Activated B cell treated with CpG ODN at 0.5 μM for 24 hours (primary cell): ENCODE measurements at regions of chr9 and their contacts with region 1.

Region 1: GRCh38 chr9:34178520-34179212 is at the start of gene UBAP1:
- DNase-seq: peak; percentile 88
- ATAC-seq: peak; percentile 97
- H3K4me3 Mint-ChIP-seq: peak within 1 kb of the TSS; percentile 99
- H3K27ac Mint-ChIP-seq: peak within 1 kb of the TSS; percentile 96
- H3K4me1 Mint-ChIP-seq: peaks cover 20% of the 10 kb centered on the region
- H3K27me3 Mint-ChIP-seq: no peaks in the 10 kb centered on the region
- CTCF ChIP-seq: no peak
- total RNA-seq, gene UBAP1: 28.3 and 30.6 TPM in 2 replicates

Region 2: DNA sequence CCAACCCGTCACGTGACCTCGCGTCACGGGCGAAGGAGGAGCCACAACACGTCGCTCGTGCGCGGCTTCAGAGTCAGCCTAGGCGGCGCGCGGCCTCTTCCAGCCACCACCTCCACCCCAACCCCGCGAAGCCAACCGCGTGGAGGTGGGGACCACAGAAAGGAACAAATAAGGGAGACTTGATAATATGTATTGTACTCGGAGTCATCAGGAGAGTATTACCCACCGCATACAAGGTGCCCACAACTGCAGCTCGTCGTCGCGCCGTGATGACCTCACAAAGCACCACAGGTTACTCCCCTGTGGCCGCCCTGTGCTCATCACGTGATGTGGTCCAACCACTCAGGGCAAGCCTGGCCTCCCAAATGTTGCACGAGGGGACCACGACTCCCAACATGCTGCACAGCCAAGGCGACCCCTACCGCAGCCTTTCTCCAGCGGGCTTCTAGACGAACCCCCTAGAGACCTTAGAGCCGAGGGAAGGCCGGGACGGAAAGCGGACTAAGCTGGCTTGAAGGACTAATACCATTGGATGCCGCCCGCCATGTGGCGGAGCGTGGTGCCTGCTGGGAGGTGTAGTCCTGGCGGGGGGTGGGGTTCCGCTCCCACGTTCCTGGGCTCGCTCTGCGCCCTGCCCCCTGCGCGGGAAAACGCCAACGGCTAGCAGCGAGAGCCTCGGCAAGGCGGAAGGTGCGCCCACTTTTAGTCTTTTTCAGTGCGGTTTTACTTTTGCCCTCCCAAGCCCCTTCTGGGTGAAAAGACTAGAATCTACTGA is 129.6 kb before region 1 on chr9:
- CTCF ChIA-PET with region 1: no interaction called
- POLR2A ChIA-PET with region 1: interaction called, 14 read pairs
- intact Hi-C with region 1: loop called (anchors 1 kb)
- DNase-seq: peak; percentile 97
- ATAC-seq: peak; percentile 80
- H3K4me3 Mint-ChIP-seq: peak overlapping the region; percentile 99
- H3K27ac Mint-ChIP-seq: peak overlapping the region; percentile 100
- H3K4me1 Mint-ChIP-seq: peaks cover 25% of the 10 kb centered on the region
- H3K27me3 Mint-ChIP-seq: no peaks in the 10 kb centered on the region
- CTCF ChIP-seq: no peak

Region 3: DNA sequence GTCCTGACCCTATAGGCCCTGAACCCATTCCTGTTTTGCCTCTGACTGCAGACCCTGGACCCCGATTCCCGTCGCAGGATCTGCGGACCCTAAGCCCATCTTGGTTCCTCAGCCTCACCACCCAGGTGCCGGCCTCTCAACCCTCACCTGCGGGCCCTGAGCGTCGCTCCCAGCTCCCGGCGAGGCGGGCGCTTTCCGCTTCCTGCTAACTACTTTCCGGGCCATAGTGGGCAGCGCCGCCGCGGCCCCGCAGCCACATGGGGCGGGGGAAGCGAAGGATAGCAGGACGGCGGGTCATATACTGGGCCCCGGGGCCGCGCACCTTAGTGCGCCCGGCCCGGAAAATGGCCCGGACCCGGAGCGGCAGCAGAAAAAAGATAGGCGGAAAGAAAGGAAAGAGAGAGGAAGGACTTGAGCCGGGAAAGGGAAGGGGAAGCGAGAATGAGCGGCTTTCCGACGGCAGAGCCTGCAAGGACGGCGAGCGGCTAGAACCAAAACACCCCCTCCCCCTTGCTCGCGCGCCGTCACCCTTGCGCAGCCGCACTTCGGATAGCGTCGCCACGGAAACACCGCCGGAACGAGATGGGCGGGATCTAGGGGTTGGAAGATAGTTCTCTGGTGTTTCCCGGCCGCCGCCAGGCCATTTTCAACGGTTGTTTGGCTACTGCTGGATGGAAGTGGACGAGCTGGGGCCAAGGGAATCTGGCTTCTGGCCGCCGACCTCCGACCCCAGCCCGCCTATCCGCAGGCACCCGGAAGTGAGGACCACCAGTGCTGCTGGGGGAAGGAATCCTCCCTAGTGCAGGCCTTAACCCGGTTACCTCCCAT is 52.2 kb before region 1 on chr9 and contains the start of gene DCAF12:
- CTCF ChIA-PET with region 1: no interaction called
- POLR2A ChIA-PET with region 1: interaction called, 5 read pairs
- intact Hi-C with region 1: loop called (anchors 2 kb)
- DNase-seq: peak; percentile 71
- ATAC-seq: peak; percentile 81
- H3K4me3 Mint-ChIP-seq: peak within 1 kb of the TSS; percentile 90
- H3K27ac Mint-ChIP-seq: peak within 1 kb of the TSS; percentile 72
- H3K4me1 Mint-ChIP-seq: peaks cover 52% of the 10 kb centered on the region
- H3K27me3 Mint-ChIP-seq: peaks cover 39% of the 10 kb centered on the region
- CTCF ChIP-seq: no peak
- total RNA-seq, gene DCAF12: 3.8 and 5.9 TPM in 2 replicates

Region 4: DNA sequence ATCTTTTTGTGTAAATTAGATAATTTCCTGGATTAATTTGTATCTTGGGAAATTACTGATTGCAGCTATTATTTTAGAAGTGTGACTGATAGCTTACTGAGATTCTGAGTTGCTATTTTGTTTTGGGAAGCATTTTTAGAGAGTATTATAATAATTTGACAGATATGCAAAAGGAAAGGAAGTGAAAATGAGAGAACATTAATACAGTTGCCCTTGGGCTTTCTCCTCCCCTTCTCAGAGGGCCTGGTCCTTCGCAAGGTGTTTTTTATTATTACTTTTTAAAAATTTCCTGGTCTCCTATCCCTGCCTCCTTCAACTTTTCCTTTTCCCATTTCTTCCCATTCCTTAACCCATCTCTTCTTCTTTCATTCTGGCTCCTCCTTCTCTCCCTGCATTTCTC is 32.7 kb after region 1 on chr9:
- CTCF ChIA-PET with region 1: no interaction called
- POLR2A ChIA-PET with region 1: interaction called, 3 read pairs
- intact Hi-C with region 1: loop called (anchors 5 kb)
- DNase-seq: no peak
- ATAC-seq: peak; percentile 52
- H3K4me3 Mint-ChIP-seq: peak overlapping the region; percentile 5
- H3K27ac Mint-ChIP-seq: peak overlapping the region; percentile 43
- H3K4me1 Mint-ChIP-seq: peaks cover 41% of the 10 kb centered on the region
- H3K27me3 Mint-ChIP-seq: no peaks in the 10 kb centered on the region
- CTCF ChIP-seq: no peak

Region 5: DNA sequence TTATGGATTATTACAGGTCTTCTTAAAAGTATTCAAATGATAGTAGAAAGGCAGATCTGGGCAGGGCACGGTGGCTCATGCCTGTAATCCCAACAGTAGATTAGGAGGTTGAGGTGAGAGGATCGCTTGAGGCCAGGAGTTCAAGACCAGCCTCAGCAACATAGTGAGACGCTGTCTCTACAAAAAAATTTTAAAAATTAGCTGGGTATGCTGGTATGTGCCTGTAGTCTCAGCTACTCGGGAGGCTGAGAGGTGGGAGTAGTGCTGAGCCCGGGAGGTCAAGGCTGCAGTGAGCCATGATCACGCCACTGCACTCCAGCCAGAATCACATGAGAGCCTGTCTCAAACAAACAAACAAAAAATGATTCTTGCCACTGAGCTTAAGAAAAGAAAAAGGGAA is 43.8 kb after region 1 on chr9:
- CTCF ChIA-PET with region 1: no interaction called
- POLR2A ChIA-PET with region 1: no interaction called
- intact Hi-C with region 1: no loop called
- DNase-seq: no peak
- ATAC-seq: no peak
- H3K4me3 Mint-ChIP-seq: no peak overlapping the region
- H3K27ac Mint-ChIP-seq: no peak overlapping the region
- H3K4me1 Mint-ChIP-seq: no peaks in the 10 kb centered on the region
- H3K27me3 Mint-ChIP-seq: no peaks in the 10 kb centered on the region
- CTCF ChIP-seq: no peak

Region 6: GRCh38 chr9:34242830-34243229 is 64.2 kb after region 1 on chr9:
- CTCF ChIA-PET with region 1: no interaction called
- POLR2A ChIA-PET with region 1: interaction called, 3 read pairs
- intact Hi-C with region 1: loop called (anchors 5 kb)
- DNase-seq: no peak
- ATAC-seq: no peak
- H3K4me3 Mint-ChIP-seq: no peak overlapping the region
- H3K27ac Mint-ChIP-seq: no peak overlapping the region
- H3K4me1 Mint-ChIP-seq: no peaks in the 10 kb centered on the region
- H3K27me3 Mint-ChIP-seq: no peaks in the 10 kb centered on the region
- CTCF ChIP-seq: no peak

Region 7: DNA sequence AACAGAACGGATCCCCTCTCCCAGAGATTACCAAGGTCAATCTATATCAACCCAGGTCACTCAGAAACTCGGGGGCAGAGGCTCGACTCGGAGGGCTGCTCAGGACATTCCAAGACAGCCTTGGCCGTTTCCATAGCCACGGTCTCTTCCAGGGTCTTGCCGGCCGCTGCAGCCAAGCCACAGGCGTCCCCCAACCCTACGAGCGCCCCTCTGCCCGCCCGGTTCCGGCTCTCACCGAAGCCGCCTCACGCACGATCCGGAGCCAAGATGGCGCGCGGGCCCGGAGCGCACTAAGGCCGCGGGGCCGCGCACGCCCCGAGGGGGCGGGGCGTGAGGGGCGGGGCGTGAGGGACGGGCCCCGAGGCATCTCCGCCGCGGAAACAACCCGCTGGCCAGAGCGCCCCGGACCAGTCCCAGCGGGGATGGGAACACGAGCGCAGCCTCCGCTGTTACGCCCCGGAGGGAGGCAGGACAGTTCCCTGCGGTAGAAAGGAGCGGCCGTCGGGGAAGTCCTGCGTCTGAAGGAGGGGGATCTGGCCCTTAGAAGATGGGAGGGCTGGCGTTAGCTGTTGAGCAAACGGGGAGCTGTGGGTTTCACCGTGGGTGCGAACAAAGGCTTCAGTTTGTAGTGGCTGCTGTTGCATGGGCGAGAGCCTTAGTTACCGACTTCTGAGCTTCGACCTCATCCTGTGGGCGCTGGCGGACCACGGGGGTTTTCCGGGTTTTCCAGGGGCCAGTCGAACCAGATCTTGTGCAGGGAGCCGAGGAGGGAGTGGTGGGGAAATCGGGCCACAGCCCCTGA is 433.4 kb after region 1 on chr9 and contains the start of gene RPP25L:
- CTCF ChIA-PET with region 1: no interaction called
- POLR2A ChIA-PET with region 1: no interaction called
- intact Hi-C with region 1: loop called (anchors 2 kb)
- DNase-seq: peak; percentile 90
- ATAC-seq: peak; percentile 96
- H3K4me3 Mint-ChIP-seq: peak within 1 kb of the TSS; percentile 86
- H3K27ac Mint-ChIP-seq: peak within 1 kb of the TSS; percentile 90
- H3K4me1 Mint-ChIP-seq: peaks cover 19% of the 10 kb centered on the region
- H3K27me3 Mint-ChIP-seq: no peaks in the 10 kb centered on the region
- CTCF ChIP-seq: no peak
- total RNA-seq, gene RPP25L: 17.5 and 18.9 TPM in 2 replicates